Activated T-helper 1 cell treated with anti-CD3 and anti-CD28 coated beads, Interleukin-12 subunit alpha, Interleukin-12 subunit beta, Interleukin-2, Interleukin-4 antibody, amounts not matched to agents 30 ng/mL and 10 ng/mL and 1 ng/mL, durations not matched to agents 14 hours and 24 hours and 36 hours (primary cell): ENCODE measurements at regions of chr15 and their contacts with region 1.

Region 1: DNA sequence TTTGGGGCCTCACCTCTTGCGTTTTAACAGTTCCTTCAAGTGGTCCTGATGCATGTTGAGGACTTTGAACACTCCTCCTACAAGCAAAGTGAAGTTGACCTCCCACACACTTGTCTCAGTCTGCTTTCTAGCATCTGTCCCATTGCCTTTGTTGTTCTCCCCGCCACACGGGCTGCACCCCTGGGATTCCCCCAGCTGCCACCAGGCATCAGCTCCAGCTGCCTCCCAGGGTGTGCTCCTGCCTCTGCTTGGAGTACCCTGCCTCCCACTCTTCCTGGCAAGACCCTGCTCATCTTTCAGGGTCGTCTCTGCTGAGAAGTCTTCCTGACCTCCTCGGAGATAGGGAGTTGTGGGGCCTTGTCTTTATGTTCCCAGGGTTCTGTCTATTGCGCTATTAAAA is 52.2 kb downstream of the IGF1R start:
- DNase-seq: no peak
- H3K4me3 Mint-ChIP-seq: no peak overlapping the region
- H3K27ac Mint-ChIP-seq: peak overlapping the region; percentile 76
- H3K4me1 Mint-ChIP-seq: peaks cover 37% of the 10 kb centered on the region
- H3K27me3 Mint-ChIP-seq: no peaks in the 10 kb centered on the region

Region 2: DNA sequence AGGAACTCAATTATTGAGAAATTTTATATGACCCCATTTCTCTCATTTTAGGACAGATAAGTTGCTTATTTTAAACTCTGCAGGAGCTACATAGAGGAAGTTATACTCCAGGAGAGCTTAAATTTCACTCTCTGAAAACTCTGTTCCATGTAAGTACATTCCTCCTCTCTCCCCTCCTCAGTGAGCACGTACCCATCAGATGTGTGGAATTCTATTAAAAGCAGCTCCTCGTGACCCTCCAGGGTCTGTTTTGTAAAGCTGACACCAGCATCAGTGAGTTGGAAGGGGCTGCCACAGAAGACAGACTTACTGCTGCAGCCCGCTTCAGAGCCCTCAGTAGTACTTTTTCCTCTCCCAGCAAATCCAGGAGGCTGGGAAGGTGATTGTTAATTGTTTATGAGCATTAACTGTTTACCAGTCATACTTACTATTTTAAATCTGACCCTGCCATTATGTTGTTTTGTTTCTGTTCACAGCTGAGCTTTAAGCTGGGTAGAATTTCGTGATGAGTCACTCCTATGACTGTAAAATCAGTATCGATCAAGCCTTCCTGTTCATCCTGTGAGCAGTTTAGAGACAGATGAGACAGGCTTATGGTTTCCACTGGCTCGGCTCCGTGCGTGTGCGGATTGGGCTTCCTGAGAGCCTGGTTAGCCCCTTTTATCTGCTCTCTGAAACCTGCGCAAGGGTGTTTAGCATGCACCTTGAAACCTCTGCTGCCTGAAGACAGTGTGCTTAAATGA is 31.8 kb before region 1 on chr15:
- intact Hi-C with region 1: loop called (anchors 1 kb)
- DNase-seq: peak; percentile 44
- H3K4me3 Mint-ChIP-seq: peak overlapping the region; percentile 40
- H3K27ac Mint-ChIP-seq: peak overlapping the region; percentile 0
- H3K4me1 Mint-ChIP-seq: peaks cover 57% of the 10 kb centered on the region
- H3K27me3 Mint-ChIP-seq: no peaks in the 10 kb centered on the region

Region 3: GRCh38 chr15:98734466-98735199 is 34.1 kb after region 1 on chr15:
- intact Hi-C with region 1: loop called (anchors 5 kb)
- DNase-seq: no peak
- H3K4me3 Mint-ChIP-seq: no peak overlapping the region
- H3K27ac Mint-ChIP-seq: no peak overlapping the region
- H3K4me1 Mint-ChIP-seq: peaks cover 27% of the 10 kb centered on the region
- H3K27me3 Mint-ChIP-seq: no peaks in the 10 kb centered on the region

Region 4: GRCh38 chr15:98744506-98744905 is 44.0 kb after region 1 on chr15:
- intact Hi-C with region 1: loop called (anchors 5 kb)
- DNase-seq: no peak
- H3K4me3 Mint-ChIP-seq: no peak overlapping the region
- H3K27ac Mint-ChIP-seq: peak overlapping the region; percentile 19
- H3K4me1 Mint-ChIP-seq: peaks cover 47% of the 10 kb centered on the region
- H3K27me3 Mint-ChIP-seq: no peaks in the 10 kb centered on the region

Region 5: GRCh38 chr15:99502182-99502581 is 801.7 kb after region 1 on chr15:
- intact Hi-C with region 1: no loop called
- DNase-seq: no peak
- H3K4me3 Mint-ChIP-seq: peak overlapping the region; percentile 12
- H3K27ac Mint-ChIP-seq: peak overlapping the region; percentile 66
- H3K4me1 Mint-ChIP-seq: peaks cover 45% of the 10 kb centered on the region
- H3K27me3 Mint-ChIP-seq: no peaks in the 10 kb centered on the region